ENCODE measurements at regions of chr1 and their contacts with region 1.

Region 1: DNA sequence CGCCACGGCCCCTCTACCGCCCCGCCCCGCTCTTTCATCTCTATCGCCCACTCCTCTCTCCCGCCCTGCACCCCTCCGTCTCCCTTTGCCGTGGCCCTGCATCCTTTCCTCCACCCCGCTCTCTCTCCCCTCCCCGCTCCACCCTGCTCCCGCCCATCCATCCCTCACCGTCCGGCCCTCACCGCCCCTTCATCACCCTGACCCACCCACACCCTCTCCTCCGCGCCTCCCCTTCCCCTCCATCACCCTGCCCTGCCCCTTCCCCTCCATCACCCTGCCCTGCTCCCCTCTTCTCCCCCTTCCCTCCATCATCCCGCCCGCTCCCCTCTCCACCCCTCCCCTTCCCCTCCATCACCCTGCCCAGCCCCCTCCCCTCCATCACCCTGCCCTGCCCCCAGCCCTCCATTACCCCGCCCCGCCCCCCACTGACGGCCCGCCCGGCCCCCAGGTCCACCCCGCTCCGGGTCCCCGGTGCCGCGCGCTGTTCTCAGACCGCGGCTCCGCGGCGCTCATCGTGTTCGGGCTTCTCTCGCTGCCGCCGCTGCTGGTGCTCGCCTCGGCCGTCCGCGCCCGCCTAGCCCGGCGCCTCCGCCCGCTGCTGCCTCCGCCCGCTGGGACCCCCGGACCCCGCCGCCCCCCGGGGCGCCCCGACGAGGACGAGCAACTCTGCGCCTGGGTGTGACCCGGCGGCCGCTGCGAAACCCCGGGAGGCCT is 6.2 kb upstream of the ANKRD65 start:
- DNase-seq: peak; percentile 35
- ATAC-seq: no peak
- H3K4me3 ChIP-seq: peak overlapping the region; percentile 58 to 83 (median 59); a peak in 3 of 6 replicates
- H3K27ac ChIP-seq: no peak overlapping the region
- H3K4me1 ChIP-seq: peaks cover 55% of the 10 kb centered on the region
- H3K27me3 ChIP-seq: no peaks in the 10 kb centered on the region
- CTCF ChIP-seq: no peak
- EP300 ChIP-seq: no peak
- POLR2A ChIP-seq: no peak
- RAD21 ChIP-seq: no peak

Region 2: GRCh38 chr1:1441002-1441888 is 14.0 kb after region 1 on chr1:
- CTCF ChIA-PET with region 1: interaction called, 10 read pairs
- POLR2A ChIA-PET with region 1: interaction called, 76 read pairs
- in situ Hi-C with region 1: no loop called
- intact Hi-C with region 1: no loop called
- DNase-seq: peak; percentile 41
- ATAC-seq: peak; percentile 60
- H3K4me3 ChIP-seq: peak overlapping the region in 2 of 3 experiments; percentile 13 to 66; a peak in 2 of 6 replicates
- H3K27ac ChIP-seq: no peak overlapping the region
- H3K4me1 ChIP-seq: peaks cover 56% of the 10 kb centered on the region
- H3K27me3 ChIP-seq: no peaks in the 10 kb centered on the region
- CTCF ChIP-seq: peak; percentile 96
- EP300 ChIP-seq: no peak
- POLR2A ChIP-seq: no peak
- RAD21 ChIP-seq: peak; percentile 93

Measured in HepG2 (cell line).